HCT116 (cell line): ENCODE measurements at regions of chr11 and their contacts with region 1.

Region 1: DNA sequence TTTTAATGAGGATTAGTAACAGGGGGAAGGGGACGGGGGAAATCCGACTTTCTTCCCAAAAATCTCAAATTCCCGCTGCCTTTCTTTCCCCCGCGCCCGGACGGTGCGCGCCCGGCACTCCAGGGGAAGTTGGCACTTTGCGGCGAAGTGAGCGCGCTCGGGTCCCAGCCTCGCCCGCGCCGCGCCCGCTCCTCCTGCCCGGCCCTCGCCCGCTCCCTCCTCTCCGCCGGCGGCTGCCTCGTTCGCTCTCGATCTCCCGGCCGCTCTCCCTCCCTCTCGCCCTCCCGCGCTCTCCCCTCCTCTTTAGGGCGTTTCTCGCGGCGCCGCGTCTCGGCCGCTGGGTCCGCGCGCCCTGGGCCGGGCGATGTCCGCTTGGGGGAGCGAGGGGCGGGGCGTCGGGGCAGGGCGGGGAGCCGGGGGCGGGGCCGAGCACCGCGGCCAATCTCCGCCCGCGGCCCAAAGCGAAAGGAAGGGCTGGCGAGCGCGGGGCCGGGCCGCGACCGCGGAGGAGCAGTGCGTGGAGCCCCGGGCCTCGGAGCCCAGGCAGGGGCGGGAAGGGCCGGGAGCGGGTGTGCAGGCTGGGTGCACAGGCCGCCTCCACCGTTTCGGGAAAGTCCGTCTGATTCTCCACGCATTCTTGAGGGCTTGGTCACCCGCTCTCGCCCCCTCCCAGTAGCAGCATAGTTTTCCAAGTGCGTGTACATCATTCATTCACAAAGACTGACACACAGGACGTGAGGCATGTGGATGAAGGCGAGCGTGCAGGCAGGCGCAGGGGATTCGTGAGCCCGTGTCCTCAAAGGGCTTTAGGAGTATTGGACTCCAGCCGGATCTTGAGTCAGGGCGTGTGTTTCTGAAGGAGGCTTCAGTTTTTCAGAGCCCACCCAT is 65.1 kb downstream of the ETS1 start:
- DNase-seq: peak; percentile 82
- ATAC-seq: peak; percentile 93
- H3K4me3 ChIP-seq: peak overlapping the region; percentile 58 to 65
- H3K27ac ChIP-seq: peak overlapping the region; percentile 49
- H3K4me1 ChIP-seq: peaks cover 5 to 43% of the 10 kb centered on the region in 2 experiments; a peak in 3 of 4 replicates
- H3K27me3 ChIP-seq: no peaks in the 10 kb centered on the region
- CTCF ChIP-seq: no peak
- POLR2A ChIP-seq: no peak
- RAD21 ChIP-seq: no peak

Region 2: GRCh38 chr11:128210148-128210940 is 312.0 kb before region 1 on chr11:
- CTCF ChIA-PET with region 1: no interaction called
- POLR2A ChIA-PET with region 1: no interaction called
- RAD21 ChIA-PET with region 1: no interaction called
- intact Hi-C with region 1: loop called (anchors 1 kb)
- DNase-seq: peak; percentile 98
- ATAC-seq: peak; percentile 87
- H3K4me3 ChIP-seq: peak overlapping the region; percentile 1 to 43; a peak in 2 of 4 replicates
- H3K27ac ChIP-seq: peak overlapping the region; percentile 21; the same call in 1 of the 2 replicates
- H3K4me1 ChIP-seq: peaks cover 38 to 51% of the 10 kb centered on the region in 2 experiments
- H3K27me3 ChIP-seq: no peaks in the 10 kb centered on the region
- CTCF ChIP-seq: no peak
- POLR2A ChIP-seq: no peak
- RAD21 ChIP-seq: peak; percentile 25; the same call in 1 of the 2 replicates

Region 3: DNA sequence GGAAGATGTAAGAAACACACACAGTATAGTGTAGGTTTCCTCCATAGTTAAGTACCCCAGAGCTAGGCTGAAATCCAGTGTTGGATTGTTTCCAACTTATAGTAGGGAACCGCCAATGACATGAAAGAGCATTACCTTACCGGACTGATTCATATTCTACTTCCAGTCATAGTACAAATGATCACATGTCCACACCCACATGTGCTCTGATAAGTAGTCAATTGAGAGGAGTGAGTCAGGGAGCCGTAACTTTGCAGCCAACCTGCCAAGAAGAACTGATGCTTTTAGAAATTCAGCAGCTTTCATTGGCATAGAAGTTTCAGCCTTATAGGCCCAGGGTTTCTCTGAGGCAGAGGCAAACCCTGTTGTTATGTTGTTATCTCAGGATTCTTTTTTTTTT is 175.5 kb before region 1 on chr11:
- CTCF ChIA-PET with region 1: no interaction called
- POLR2A ChIA-PET with region 1: no interaction called
- RAD21 ChIA-PET with region 1: no interaction called
- intact Hi-C with region 1: no loop called
- DNase-seq: no peak
- ATAC-seq: no peak
- H3K4me3 ChIP-seq: no peak overlapping the region
- H3K27ac ChIP-seq: no peak overlapping the region
- H3K4me1 ChIP-seq: no peaks in the 10 kb centered on the region
- H3K27me3 ChIP-seq: peaks cover 35% of the 10 kb centered on the region
- CTCF ChIP-seq: no peak
- POLR2A ChIP-seq: no peak
- RAD21 ChIP-seq: no peak

Region 4: DNA sequence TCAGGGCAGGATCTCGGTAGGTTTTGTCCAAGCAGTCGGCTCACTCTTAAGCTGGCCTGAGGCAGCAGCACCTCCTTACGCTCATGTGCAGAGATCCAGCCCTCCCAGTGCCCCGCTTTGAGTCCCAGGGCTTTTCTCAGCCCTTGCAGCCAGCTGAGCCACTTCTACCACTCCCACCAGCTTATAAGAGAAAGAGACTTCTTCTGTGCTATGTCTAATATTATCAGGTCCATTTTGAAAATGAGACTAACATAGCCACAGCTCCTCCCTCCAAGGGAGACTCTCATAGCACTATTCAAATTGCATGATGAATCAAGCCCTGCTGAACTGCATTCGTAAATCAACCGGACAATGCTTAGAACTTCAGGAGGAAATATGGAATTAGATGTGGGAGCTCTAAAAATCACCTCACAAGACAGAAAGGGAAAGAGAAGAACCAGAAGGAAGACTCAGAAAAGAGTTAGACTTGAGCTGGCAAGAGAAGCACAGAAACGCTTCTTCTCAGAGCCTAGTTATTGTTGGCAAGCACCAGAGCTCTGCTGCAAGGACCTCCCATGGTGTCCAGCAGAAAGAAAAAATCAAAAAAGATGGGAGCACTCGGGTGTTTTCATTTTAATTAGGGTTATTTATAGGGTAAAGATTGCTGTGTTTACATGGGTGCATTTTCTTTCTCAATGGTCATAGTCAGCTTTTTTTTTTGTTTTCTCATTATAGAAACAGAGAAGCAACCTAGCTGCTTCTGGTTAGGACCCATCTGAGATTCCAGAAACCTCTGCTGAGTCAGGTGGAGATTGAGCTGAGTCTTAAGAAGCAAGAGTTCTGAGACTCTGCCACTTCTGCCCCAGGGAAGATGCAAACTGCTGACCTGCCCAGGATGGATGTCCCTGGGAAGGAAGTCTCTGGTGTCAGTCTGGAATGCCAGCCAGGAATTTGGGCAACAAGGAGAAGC is 116.3 kb before region 1 on chr11:
- CTCF ChIA-PET with region 1: no interaction called
- POLR2A ChIA-PET with region 1: no interaction called
- RAD21 ChIA-PET with region 1: no interaction called
- intact Hi-C with region 1: no loop called
- DNase-seq: no peak
- ATAC-seq: no peak
- H3K4me3 ChIP-seq: no peak overlapping the region
- H3K27ac ChIP-seq: no peak overlapping the region
- H3K4me1 ChIP-seq: no peaks in the 10 kb centered on the region
- H3K27me3 ChIP-seq: peaks cover 67% of the 10 kb centered on the region
- CTCF ChIP-seq: no peak
- POLR2A ChIP-seq: no peak
- RAD21 ChIP-seq: no peak

Region 5: GRCh38 chr11:128497061-128497775 is 25.1 kb before region 1 on chr11:
- CTCF ChIA-PET with region 1: no interaction called
- POLR2A ChIA-PET with region 1: no interaction called
- RAD21 ChIA-PET with region 1: no interaction called
- intact Hi-C with region 1: loop called (anchors 2 kb)
- DNase-seq: peak; percentile 83
- ATAC-seq: peak; percentile 89
- H3K4me3 ChIP-seq: peak overlapping the region; percentile 20 to 47
- H3K27ac ChIP-seq: peak overlapping the region; percentile 67
- H3K4me1 ChIP-seq: peaks cover 21 to 48% of the 10 kb centered on the region in 2 experiments
- H3K27me3 ChIP-seq: no peaks in the 10 kb centered on the region
- CTCF ChIP-seq: no peak
- POLR2A ChIP-seq: no peak
- RAD21 ChIP-seq: no peak; the same call in 1 of the 2 replicates